ENCODE measurements at regions of chr7 and their contacts with region 1.

Region 1: DNA sequence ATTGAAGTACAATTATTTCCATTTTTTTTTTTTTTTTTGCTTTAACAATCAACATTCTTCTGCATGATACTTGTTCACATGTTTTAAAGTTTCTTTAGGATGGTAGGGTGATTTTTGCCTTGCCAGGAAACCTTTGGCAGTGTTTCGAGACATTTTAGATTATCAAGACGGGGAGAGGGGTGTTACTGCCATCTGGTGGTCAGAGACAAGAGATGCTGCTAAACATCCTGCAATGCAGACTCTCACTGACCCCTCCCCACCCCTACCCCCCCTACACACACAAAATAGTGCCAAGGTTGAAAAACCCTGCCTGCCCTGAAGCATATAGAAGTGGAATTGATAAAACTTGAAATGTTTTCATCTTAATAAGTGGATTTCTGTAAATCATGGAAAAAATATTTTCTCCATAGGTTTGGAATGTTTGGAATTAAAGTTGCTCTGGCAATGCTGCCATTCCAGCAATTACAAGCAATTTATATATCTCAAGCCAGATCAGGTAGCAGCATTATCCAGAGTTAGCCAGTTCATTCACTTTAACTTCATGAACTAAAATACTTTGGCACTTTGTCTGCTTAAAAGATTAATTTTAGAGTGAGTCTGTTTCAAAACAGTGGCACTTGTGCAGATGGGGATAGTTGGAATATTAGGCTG is 62.1 kb downstream of the SDHAF3 start:
- DNase-seq: peak; percentile 37 to 49 (median 44)
- H3K4me3 ChIP-seq: no peak overlapping the region
- H3K4me3 Mint-ChIP-seq: no peak overlapping the region
- H3K27ac ChIP-seq: no peak overlapping the region
- H3K27ac Mint-ChIP-seq: peak overlapping the region in 1 of 7 donors; percentile 59
- H3K4me1 ChIP-seq: no peaks in the 10 kb centered on the region
- H3K4me1 Mint-ChIP-seq: peaks cover 0 to 3% (median 0%) of the 10 kb centered on the region in 4 donors
- H3K27me3 ChIP-seq: no peaks in the 10 kb centered on the region
- H3K27me3 Mint-ChIP-seq: no peaks in the 10 kb centered on the region

Region 2: DNA sequence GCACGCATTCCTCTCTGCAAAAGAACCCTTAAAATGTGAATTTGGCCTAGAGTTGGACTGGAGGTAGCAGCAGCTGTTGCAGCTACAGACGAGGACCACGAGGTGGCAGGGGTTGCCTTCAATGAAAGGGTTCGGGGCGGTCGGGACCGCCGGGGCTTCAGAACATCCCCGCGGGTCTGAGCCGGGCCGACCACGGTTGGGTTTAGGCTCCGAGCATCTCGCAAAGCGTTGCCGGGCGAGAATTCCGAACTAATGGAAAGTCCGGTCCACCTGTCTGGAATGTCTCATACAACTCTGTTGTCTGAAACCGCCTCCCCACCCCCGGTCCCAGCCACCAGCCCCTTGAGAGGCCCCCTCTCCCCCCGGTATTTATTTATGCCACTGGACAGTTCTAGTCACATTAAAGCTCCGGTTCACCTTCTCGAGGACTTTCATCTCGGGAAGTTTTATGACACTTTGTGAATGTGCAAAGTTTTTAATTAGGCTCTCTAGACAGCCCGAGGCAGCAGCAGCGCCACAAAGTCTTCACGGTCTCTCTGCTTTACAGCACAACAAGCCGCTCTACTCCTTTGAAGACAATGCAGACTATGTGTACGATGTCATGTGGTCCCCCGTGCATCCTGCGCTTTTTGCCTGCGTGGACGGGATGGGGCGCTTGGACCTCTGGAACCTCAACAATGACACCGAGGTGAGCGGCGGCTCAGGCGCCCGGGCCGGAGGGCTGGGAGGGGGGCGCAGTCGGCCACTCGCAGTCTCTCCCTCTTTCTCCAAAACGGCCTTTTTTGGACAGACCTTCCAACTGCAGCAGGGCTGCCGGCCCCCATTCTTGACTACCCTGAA is 1103.8 kb before region 1 on chr7:
- CTCF ChIA-PET with region 1: no interaction called
- POLR2A ChIA-PET with region 1: no interaction called
- intact Hi-C with region 1: loop called (anchors 1 kb)
- DNase-seq: peak; percentile 36 to 49 (median 42)
- H3K4me3 ChIP-seq: peak overlapping the region in 1 of 2 donors; percentile 30
- H3K4me3 Mint-ChIP-seq: peak overlapping the region; percentile 86 to 95 (median 88)
- H3K27ac ChIP-seq: no peak overlapping the region
- H3K27ac Mint-ChIP-seq: no peak overlapping the region
- H3K4me1 ChIP-seq: peaks cover 10% of the 10 kb centered on the region
- H3K4me1 Mint-ChIP-seq: peaks cover 0 to 9% (median 6%) of the 10 kb centered on the region in 4 donors
- H3K27me3 ChIP-seq: peaks cover 15% of the 10 kb centered on the region
- H3K27me3 Mint-ChIP-seq: peaks cover 17 to 27% of the 10 kb centered on the region in 2 donors

Region 3: DNA sequence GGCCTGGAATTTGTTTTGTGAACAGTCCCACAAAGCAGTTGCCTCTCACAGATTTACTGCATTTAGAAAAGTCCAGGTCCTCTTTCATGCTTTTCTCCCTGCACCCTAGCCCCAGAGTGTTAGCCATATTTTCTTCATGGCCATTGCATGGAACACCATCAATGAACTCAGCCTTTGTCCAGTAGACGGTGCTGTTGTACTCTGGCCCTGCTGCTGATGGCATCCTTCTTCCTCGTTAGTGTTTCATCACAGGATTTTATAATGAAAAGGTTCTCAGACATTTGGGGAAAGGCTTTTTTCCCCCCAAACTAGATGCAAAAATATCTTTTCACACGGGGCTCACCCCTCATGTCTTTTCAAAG is 764.7 kb before region 1 on chr7:
- CTCF ChIA-PET with region 1: no interaction called
- POLR2A ChIA-PET with region 1: no interaction called
- intact Hi-C with region 1: loop called (anchors 5 kb)
- DNase-seq: peak; percentile 20 to 47 (median 43)
- H3K4me3 ChIP-seq: no peak overlapping the region
- H3K4me3 Mint-ChIP-seq: no peak overlapping the region
- H3K27ac ChIP-seq: no peak overlapping the region
- H3K27ac Mint-ChIP-seq: no peak overlapping the region
- H3K4me1 ChIP-seq: no peaks in the 10 kb centered on the region
- H3K4me1 Mint-ChIP-seq: no peaks in the 10 kb centered on the region
- H3K27me3 ChIP-seq: no peaks in the 10 kb centered on the region
- H3K27me3 Mint-ChIP-seq: peaks cover 0 to 8% of the 10 kb centered on the region in 2 donors

Region 4: GRCh38 chr7:96901822-96902445 is 277.6 kb before region 1 on chr7:
- CTCF ChIA-PET with region 1: no interaction called
- POLR2A ChIA-PET with region 1: no interaction called
- intact Hi-C with region 1: no loop called
- DNase-seq: no peak
- H3K4me3 ChIP-seq: no peak overlapping the region
- H3K4me3 Mint-ChIP-seq: no peak overlapping the region
- H3K27ac ChIP-seq: no peak overlapping the region
- H3K27ac Mint-ChIP-seq: no peak overlapping the region
- H3K4me1 ChIP-seq: no peaks in the 10 kb centered on the region
- H3K4me1 Mint-ChIP-seq: no peaks in the 10 kb centered on the region
- H3K27me3 ChIP-seq: no peaks in the 10 kb centered on the region
- H3K27me3 Mint-ChIP-seq: peaks cover 4 to 9% of the 10 kb centered on the region in 2 donors

Region 5: GRCh38 chr7:97027427-97028234 is 151.9 kb before region 1 on chr7:
- CTCF ChIA-PET with region 1: no interaction called
- POLR2A ChIA-PET with region 1: no interaction called
- intact Hi-C with region 1: loop called (anchors 5 kb)
- DNase-seq: peak in 4 of 5 donors; percentile 57 to 66 (median 61)
- H3K4me3 ChIP-seq: peak overlapping the region in 1 of 2 donors; percentile 26
- H3K4me3 Mint-ChIP-seq: peak overlapping the region; percentile 77 to 88 (median 84)
- H3K27ac ChIP-seq: no peak overlapping the region
- H3K27ac Mint-ChIP-seq: peak overlapping the region in 2 of 7 donors; percentile 42 to 53
- H3K4me1 ChIP-seq: peaks cover 17% of the 10 kb centered on the region
- H3K4me1 Mint-ChIP-seq: peaks cover 28 to 43% (median 36%) of the 10 kb centered on the region in 4 donors
- H3K27me3 ChIP-seq: peaks cover 43% of the 10 kb centered on the region
- H3K27me3 Mint-ChIP-seq: peaks cover 51 to 64% of the 10 kb centered on the region in 2 donors

Region 6: DNA sequence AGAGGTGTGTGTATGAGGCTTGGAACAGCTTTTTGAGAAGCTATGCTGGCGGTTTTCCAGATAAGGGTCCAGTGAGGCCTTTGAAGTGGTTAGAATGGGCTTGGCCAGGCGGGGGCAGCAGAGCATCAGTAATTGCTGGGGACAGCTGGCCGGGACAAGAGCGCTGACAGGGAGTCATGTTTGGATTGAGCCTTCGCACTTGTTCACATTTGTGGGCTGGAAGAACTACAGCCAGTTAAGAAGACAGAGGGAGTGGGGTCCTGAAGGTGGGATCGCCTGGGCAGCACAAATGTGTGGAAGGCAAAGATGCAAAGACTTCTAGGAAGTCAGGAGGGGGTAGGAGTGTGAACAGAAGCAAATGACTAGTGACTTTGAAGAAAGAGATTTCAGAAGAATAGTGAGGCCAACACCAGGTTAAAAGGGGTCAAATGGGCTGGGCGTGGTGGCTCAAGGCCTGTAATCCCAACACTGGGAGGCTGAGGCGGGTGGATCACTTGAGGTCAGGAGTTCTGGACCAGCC is 74.8 kb before region 1 on chr7:
- CTCF ChIA-PET with region 1: interaction called, 12 read pairs
- POLR2A ChIA-PET with region 1: no interaction called
- intact Hi-C with region 1: loop called (anchors 1 kb)
- DNase-seq: peak; percentile 27 to 59 (median 50)
- H3K4me3 ChIP-seq: no peak overlapping the region
- H3K4me3 Mint-ChIP-seq: no peak overlapping the region
- H3K27ac ChIP-seq: no peak overlapping the region
- H3K27ac Mint-ChIP-seq: no peak overlapping the region
- H3K4me1 ChIP-seq: no peaks in the 10 kb centered on the region
- H3K4me1 Mint-ChIP-seq: no peaks in the 10 kb centered on the region
- H3K27me3 ChIP-seq: no peaks in the 10 kb centered on the region
- H3K27me3 Mint-ChIP-seq: peaks cover 15 to 22% of the 10 kb centered on the region in 2 donors

Region 7: GRCh38 chr7:97145068-97145467 is 34.5 kb before region 1 on chr7:
- CTCF ChIA-PET with region 1: no interaction called
- POLR2A ChIA-PET with region 1: no interaction called
- intact Hi-C with region 1: loop called (anchors 2 kb)
- DNase-seq: peak in 4 of 5 donors; percentile 1 to 9 (median 2)
- H3K4me3 ChIP-seq: no peak overlapping the region
- H3K4me3 Mint-ChIP-seq: no peak overlapping the region
- H3K27ac ChIP-seq: no peak overlapping the region
- H3K27ac Mint-ChIP-seq: no peak overlapping the region
- H3K4me1 ChIP-seq: no peaks in the 10 kb centered on the region
- H3K4me1 Mint-ChIP-seq: peaks cover 0 to 12% (median under 1%) of the 10 kb centered on the region in 4 donors
- H3K27me3 ChIP-seq: no peaks in the 10 kb centered on the region
- H3K27me3 Mint-ChIP-seq: no peaks in the 10 kb centered on the region

Measured in CD4-positive, alpha-beta memory T cell (primary cell).